IMR-90 (cell line): ENCODE measurements at regions of chr10 and their contacts with region 1.

Region 1: DNA sequence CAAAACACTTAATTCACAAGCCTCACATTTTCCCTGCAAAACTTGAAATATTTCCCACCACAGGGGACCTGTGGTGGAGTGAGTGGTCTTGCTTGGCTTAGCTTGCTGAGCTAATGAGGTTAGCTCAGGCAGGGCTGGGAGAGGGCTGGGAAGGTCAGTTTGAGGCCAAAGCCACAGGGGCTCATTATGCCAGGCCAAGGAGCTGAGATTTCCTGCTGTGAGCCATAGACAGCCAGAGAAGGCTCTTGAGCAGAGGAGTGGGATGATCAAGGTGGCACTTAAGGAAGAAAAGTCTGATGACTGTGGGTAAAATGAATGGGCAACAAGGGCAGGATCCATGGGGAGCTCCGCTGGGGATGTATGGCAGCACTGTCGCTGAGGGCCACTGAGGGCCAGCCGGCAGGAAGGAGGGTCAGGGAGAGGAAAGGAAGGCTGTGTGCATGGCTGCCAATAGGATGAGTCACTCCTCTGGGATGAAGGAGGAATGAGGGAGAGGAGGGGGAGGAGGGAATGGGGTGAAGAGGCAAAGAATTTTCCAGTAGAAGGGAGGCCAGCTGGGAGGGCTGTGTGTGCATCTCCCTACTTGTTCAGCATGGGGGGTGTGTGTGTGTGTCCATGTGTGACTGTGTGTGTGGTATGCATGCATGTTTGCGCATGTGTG is 18.7 kb upstream of the ZNF488 start:
- DNase-seq: peak; percentile 88
- ATAC-seq: peak; percentile 91
- H3K4me3 ChIP-seq: no peak overlapping the region
- H3K27ac ChIP-seq: peak overlapping the region; percentile 50
- H3K4me1 ChIP-seq: peaks cover 27% of the 10 kb centered on the region
- H3K27me3 ChIP-seq: 0 out of 2 replicates have a peak, but pooled peaks cover 2% of the 10 kb centered on the region
- CTCF ChIP-seq: no peak
- POLR2A ChIP-seq: no peak
- RAD21 ChIP-seq: no peak

Region 2: DNA sequence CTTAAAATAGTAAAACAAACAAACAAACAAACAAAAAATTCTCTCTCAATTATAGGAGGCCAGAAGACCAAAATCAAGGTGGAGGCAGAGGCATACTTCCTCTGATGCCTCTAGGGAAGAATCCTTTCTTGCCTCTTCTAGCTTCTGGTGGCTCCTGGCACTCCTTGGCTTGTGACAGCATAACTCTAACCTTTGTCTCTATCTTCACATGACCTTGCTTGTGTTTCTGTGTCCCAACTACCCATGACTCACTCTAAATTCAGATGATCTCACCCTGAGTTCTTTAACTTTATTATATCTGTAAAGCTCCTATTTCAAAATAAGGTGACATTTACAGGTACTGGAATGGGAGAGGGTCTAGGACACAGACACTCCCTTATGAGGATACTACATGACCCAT is 1204.3 kb before region 1 on chr10:
- CTCF ChIA-PET with region 1: no interaction called
- POLR2A ChIA-PET with region 1: no interaction called
- dilution Hi-C with region 1: no loop called
- in situ Hi-C with region 1: no loop called
- intact Hi-C with region 1: no loop called
- DNase-seq: no peak
- ATAC-seq: no peak
- H3K4me3 ChIP-seq: no peak overlapping the region
- H3K27ac ChIP-seq: no peak overlapping the region
- H3K4me1 ChIP-seq: no peaks in the 10 kb centered on the region
- H3K27me3 ChIP-seq: no peaks in the 10 kb centered on the region; the same call in none of the 2 replicates
- CTCF ChIP-seq: no peak
- POLR2A ChIP-seq: no peak
- RAD21 ChIP-seq: no peak

Region 3: DNA sequence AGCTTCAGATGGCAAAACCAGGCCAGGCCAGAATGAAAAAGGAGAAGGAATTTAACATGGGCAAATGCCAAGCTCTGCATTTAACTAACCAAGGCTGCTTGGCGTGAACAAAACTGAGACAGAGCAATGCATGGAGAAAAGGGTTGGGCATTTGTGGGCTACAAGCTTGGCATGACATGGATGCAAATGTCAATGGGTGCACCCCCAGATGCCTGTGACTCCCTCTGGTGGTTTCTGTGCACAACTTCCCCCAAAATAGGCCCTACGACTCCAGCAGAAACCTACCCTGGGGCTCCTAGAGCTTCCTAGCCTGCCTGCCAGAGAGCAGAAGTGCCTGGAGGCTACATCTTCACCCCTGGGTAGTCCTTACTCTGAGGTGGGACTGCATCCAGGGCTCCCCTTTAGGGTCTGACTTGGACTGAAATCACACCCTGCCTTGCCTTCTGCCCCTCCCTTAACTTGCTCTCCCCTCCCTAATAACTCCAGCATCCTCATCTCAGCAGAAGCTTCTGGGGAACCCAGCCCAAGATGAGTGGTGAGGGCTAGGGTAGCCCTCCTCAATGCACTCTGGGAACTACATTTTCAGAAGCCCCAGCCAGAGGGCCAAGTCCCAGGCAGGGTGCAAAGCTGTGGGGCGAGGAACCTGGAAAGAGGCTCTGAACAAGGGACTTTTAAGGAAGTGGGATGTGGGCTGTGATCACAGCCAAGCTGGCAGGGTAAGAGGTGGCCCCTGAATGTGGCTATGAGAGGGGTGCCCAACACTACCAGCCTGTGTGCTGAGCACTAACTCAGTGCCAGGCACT is 857.6 kb before region 1 on chr10:
- CTCF ChIA-PET with region 1: no interaction called
- POLR2A ChIA-PET with region 1: no interaction called
- dilution Hi-C with region 1: no loop called
- in situ Hi-C with region 1: loop called (anchors 25 kb)
- intact Hi-C with region 1: no loop called
- DNase-seq: no peak
- ATAC-seq: no peak; the same call in 1 of the 2 replicates
- H3K4me3 ChIP-seq: no peak overlapping the region
- H3K27ac ChIP-seq: no peak overlapping the region
- H3K4me1 ChIP-seq: peaks cover 10% of the 10 kb centered on the region
- H3K27me3 ChIP-seq: peaks cover 2% of the 10 kb centered on the region
- CTCF ChIP-seq: peak; percentile 48
- POLR2A ChIP-seq: no peak
- RAD21 ChIP-seq: peak; percentile 49